Activated T-helper 2 cell treated with anti-CD3 and anti-CD28 coated beads, Interferon-gamma antibody, Interleukin-2, Interleukin-4, amounts not matched to agents 10 μg/mL and 5 μg/mL and 100 μg/mL, durations not matched to agents 14 hours and 24 hours and 36 hours (primary cell): ENCODE measurements at regions of chr22 and their contacts with region 1.

Region 1: DNA sequence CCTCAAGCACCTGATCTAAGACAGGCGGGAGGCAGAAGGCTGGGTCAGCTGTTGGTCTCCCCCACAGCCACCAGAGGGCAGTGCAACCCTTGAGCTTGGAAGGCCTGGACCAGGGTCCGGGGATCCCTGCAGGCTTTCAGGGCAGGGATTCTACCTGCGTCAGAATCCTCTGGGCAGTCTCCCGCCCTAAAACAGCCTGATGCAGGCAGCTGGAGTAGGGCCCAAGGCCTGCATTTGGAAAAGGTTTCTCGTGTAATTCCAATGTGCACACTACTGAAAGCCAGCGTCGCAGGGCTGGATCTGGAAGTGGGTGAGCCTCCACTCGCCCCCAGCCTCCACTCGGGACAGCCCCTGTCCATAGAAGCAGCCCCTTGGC is 31.8 kb downstream of the BID start:
- DNase-seq: peak; percentile 44
- H3K4me3 Mint-ChIP-seq: no peak overlapping the region
- H3K27ac Mint-ChIP-seq: no peak overlapping the region
- H3K4me1 Mint-ChIP-seq: no peaks in the 10 kb centered on the region
- H3K27me3 Mint-ChIP-seq: no peaks in the 10 kb centered on the region

Region 2: GRCh38 chr22:17684245-17684644 is 58.3 kb before region 1 on chr22:
- intact Hi-C with region 1: no loop called
- DNase-seq: no peak
- H3K4me3 Mint-ChIP-seq: no peak overlapping the region
- H3K27ac Mint-ChIP-seq: no peak overlapping the region
- H3K4me1 Mint-ChIP-seq: no peaks in the 10 kb centered on the region
- H3K27me3 Mint-ChIP-seq: no peaks in the 10 kb centered on the region

Region 3: GRCh38 chr22:17773606-17774205 is 31.2 kb after region 1 on chr22:
- intact Hi-C with region 1: loop called (anchors 5 kb)
- DNase-seq: peak; percentile 40
- H3K4me3 Mint-ChIP-seq: peak overlapping the region; percentile 77
- H3K27ac Mint-ChIP-seq: no peak overlapping the region
- H3K4me1 Mint-ChIP-seq: peaks cover 42% of the 10 kb centered on the region
- H3K27me3 Mint-ChIP-seq: peaks cover 29% of the 10 kb centered on the region